ENCODE measurements at regions of chr19 and their contacts with region 1.

Region 1: DNA sequence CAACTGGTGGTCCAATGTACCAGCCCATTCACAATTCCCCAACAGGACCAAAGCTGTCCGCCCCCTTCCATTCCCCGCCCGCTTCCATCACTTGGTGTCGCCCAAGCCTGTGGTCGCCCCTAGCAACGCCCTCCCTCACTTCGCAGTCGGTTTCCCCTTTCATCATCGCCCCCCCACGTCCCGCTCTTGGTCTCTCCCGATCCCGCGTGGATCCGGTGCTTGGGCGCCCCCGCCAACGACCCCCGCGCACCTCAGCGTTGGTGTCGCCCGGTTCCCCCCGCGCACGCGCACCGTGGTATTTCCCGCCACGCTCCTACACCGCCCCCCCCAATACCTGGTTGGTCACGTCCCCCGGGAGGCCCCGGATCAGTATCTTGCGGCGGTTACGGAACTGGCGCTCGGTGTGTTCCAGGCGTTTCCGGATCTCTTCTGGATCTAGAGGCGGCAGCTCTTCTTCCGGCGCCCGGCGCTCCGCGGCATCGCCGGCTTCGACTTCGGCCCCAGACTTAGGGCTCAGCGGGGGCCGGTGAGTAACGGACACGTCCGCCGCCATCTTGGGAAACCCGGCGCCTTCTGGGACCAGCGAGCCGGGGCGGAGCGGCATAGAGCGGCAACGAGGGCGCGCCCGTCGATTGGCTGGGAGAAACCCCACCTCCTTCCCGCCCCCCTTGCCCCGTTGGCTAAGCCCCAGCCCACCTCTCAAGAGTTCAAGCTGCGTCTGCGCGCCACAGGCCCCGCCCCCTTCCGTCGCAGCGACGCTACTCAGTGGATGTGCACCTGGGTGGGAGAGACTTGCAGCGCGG is at the start of gene RAVER1:
- DNase-seq: peak; percentile 99
- ATAC-seq: peak; percentile 97
- H3K4me3 Mint-ChIP-seq: peak within 1 kb of the TSS; percentile 97
- H3K27ac Mint-ChIP-seq: peak within 1 kb of the TSS; percentile 96
- H3K4me1 Mint-ChIP-seq: peaks cover 25% of the 10 kb centered on the region
- H3K27me3 Mint-ChIP-seq: no peaks in the 10 kb centered on the region
- total RNA-seq, gene RAVER1: 83.7 to 90.8 TPM

Region 2: GRCh38 chr19:8513687-8514504 is 1819.3 kb before region 1 on chr19 and contains the start of gene ZNF414:
- CTCF ChIA-PET with region 1: no interaction called
- POLR2A ChIA-PET with region 1: no interaction called
- intact Hi-C with region 1: loop called in 1 of 2 experiments (anchors 5 kb)
- DNase-seq: peak; percentile 99
- ATAC-seq: peak; percentile 81
- H3K4me3 Mint-ChIP-seq: peak within 1 kb of the TSS; percentile 81
- H3K27ac Mint-ChIP-seq: peak within 1 kb of the TSS; percentile 97
- H3K4me1 Mint-ChIP-seq: peaks cover 55% of the 10 kb centered on the region
- H3K27me3 Mint-ChIP-seq: no peaks in the 10 kb centered on the region
- total RNA-seq, gene ZNF414: 21.0 to 23.7 TPM

Region 3: GRCh38 chr19:10095948-10096621 is 237.1 kb before region 1 on chr19:
- CTCF ChIA-PET with region 1: interaction called, 3 read pairs
- POLR2A ChIA-PET with region 1: no interaction called
- intact Hi-C with region 1: loop called in 1 of 2 experiments (anchors 1 kb)
- DNase-seq: peak; percentile 94
- ATAC-seq: peak; percentile 90
- H3K4me3 Mint-ChIP-seq: peak overlapping the region; percentile 56
- H3K27ac Mint-ChIP-seq: peak overlapping the region; percentile 69
- H3K4me1 Mint-ChIP-seq: peaks cover 26% of the 10 kb centered on the region
- H3K27me3 Mint-ChIP-seq: no peaks in the 10 kb centered on the region

Region 4: GRCh38 chr19:10251792-10252694 is 81.1 kb before region 1 on chr19 and contains the start of gene MRPL4:
- CTCF ChIA-PET with region 1: interaction called, 3 read pairs
- POLR2A ChIA-PET with region 1: no interaction called
- intact Hi-C with region 1: loop called (anchors 1 to 5 kb)
- DNase-seq: peak; percentile 97
- ATAC-seq: peak; percentile 99
- H3K4me3 Mint-ChIP-seq: peak within 1 kb of the TSS; percentile 97
- H3K27ac Mint-ChIP-seq: peak within 1 kb of the TSS; percentile 97
- H3K4me1 Mint-ChIP-seq: peaks cover 18% of the 10 kb centered on the region
- H3K27me3 Mint-ChIP-seq: no peaks in the 10 kb centered on the region
- total RNA-seq, gene MRPL4: 130 to 140 TPM

Region 5: DNA sequence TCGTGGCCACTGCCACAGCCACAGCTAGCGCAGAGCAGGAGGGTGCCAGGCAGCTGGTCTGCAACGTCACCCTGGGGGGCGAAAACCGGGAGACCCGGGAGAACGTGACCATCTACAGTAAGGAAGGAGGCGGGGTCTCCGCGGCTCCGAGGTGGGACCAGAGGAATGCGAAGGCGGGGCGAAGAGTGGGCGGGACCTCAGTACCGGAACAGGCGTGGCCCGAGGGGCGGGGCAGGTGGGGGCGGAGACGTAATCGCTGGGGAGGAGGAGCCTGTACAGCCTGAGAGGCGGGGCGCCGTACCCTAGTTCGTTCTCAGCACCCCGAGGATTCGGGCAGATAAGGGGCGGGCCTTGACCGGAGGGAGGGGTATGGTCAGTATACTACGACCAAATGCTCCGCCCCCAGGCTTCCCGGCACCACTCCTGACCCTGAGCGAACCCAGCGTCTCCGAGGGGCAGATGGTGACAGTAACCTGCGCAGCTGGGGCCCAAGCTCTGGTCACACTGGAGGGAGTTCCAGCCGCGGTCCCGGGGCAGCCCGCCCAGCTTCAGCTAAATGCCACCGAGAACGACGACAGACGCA is 40.9 kb before region 1 on chr19:
- CTCF ChIA-PET with region 1: no interaction called
- POLR2A ChIA-PET with region 1: no interaction called
- intact Hi-C with region 1: loop called in 1 of 2 experiments (anchors 1 kb)
- DNase-seq: peak; percentile 92
- ATAC-seq: peak; percentile 63
- H3K4me3 Mint-ChIP-seq: peak overlapping the region; percentile 66
- H3K27ac Mint-ChIP-seq: no peak overlapping the region
- H3K4me1 Mint-ChIP-seq: peaks cover 59% of the 10 kb centered on the region
- H3K27me3 Mint-ChIP-seq: peaks cover 70% of the 10 kb centered on the region

Region 6: DNA sequence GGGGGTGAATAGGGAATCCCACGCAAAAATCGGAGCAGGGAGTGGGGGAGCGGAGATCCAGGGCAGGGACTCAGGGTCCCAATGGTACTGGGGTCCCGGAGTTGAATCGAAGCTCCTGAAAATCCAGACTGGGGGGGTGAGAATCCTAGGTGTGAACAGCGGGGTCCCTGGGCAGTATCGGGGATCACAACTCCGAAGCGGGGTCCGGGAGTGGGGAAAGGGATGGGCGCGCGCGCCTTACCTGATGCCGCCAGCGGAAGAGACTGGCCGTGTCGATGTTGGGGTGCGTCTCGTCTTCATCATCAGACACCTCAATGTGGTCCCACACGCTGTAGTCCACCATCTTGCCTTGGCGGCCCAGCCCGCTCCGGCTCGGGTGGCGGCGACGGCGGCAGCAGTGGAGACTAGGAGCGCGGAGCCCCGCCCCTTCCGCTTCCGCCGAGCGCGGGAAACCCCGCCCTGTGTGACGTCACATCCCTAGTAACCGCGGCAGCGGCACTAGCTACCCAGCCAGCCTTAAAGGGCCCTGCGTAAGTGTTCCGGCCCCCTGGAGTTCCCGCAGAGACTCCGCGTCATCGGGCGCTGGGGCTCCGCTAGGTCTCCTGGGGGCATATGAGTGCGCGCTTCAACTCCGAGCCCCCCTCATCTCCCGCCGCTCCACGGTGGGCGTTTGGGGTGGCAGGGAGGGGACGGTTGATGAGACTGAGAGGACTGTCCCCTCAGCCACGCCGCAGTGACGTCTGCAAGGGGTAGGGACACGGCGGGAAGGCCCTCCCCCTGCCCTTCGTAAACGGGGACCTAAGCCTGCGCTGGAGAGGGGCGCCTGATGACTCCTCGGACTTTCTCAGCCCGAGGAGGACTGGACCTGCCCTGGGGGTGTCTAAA is 70.2 kb after region 1 on chr19 and contains the start of gene CDC37:
- CTCF ChIA-PET with region 1: no interaction called
- POLR2A ChIA-PET with region 1: no interaction called
- intact Hi-C with region 1: loop called in 1 of 2 experiments (anchors 1 kb)
- DNase-seq: peak; percentile 99
- ATAC-seq: peak; percentile 79
- H3K4me3 Mint-ChIP-seq: peak within 1 kb of the TSS; percentile 94
- H3K27ac Mint-ChIP-seq: peak within 1 kb of the TSS; percentile 87
- H3K4me1 Mint-ChIP-seq: peaks cover 61% of the 10 kb centered on the region
- H3K27me3 Mint-ChIP-seq: no peaks in the 10 kb centered on the region
- total RNA-seq, gene CDC37: 178 to 190 TPM

Region 7: DNA sequence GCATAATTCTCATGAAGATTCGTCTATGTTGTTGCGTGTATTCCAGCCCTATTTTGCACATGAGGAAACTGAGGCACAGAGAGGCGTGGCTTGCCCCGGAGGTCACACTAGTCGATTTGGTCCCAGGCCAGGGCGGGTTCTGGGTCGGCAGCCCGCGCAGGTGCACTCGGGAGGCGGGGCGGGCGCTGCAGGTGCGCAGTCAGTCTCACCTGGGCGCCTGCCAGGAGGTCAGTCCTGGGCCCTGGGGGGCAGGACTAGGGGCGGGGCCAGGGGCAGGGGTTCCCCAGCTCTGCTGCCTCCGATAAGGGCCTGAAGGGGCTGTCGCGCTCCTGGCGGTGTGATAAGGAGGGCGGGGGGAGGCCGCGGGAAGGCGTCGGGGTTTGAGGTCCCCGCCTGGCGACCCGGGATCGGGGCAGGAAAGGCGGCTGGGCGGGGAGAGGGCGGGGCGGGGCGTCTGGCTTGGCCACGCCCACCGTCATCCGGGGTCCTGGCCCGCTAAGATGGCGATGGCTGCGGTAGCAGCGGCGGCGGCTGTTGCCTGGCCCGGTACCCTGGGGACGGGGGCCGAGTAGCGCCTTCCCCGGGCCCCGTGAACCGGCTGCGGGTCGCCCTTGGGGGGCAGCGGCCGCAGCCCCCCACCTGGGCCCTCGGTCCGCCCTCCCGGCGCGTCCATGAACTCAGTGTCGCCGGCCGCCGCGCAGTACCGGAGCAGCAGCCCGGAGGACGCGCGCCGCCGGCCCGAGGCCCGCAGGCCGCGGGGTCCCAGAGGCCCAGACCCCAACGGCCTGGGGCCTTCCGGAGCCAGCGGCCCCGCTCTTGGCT is 210.5 kb after region 1 on chr19 and contains the start of gene ATG4D:
- CTCF ChIA-PET with region 1: no interaction called
- POLR2A ChIA-PET with region 1: no interaction called
- intact Hi-C with region 1: loop called in 1 of 2 experiments (anchors 1 kb)
- DNase-seq: peak; percentile 89
- ATAC-seq: peak; percentile 85
- H3K4me3 Mint-ChIP-seq: peak within 1 kb of the TSS; percentile 85
- H3K27ac Mint-ChIP-seq: peak within 1 kb of the TSS; percentile 84
- H3K4me1 Mint-ChIP-seq: peaks cover 14% of the 10 kb centered on the region
- H3K27me3 Mint-ChIP-seq: peaks cover 8% of the 10 kb centered on the region
- total RNA-seq, gene ATG4D: 18.9 to 19.3 TPM